T-cell (primary cell): ENCODE measurements at regions of chr9 and their contacts with region 1.

Region 1: DNA sequence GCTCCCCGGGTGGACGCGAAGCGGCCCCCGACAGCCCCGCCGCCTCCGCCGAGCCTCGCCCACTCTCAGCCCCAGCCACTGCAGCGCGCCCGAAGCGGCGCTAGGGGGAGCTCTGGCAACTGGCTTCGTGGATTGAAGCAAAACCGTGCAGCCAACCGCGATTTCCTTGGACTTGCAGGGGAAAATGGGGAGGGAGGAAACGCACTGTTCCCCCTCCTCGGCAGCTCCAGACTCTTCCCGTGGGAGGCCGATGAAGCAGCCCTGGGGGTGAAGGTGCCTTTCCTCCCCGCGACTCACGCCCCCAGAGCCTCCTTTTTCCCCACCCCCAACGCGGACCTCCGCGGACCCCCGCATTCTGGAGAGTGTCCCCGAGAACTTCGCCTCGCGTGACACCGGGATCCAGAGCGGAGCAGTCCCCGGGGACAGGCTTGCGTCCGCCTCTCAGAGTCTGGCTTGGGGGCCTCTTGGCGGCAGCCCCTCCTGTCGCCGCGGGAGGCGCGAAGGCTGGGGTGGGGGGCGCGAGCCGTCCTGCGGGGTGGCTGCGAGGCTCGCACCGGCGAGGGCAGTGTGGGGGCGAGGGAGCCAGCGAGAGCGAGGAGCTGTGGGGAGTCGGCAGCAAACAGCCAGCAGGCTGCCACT is 3.9 kb downstream of the IER5L start:
- DNase-seq: peak; percentile 46 to 87 (median 70)
- ATAC-seq: peak; percentile 15 to 21 (median 18)
- H3K4me3 ChIP-seq: peak overlapping the region; percentile 66 to 89
- H3K4me3 Mint-ChIP-seq: peak overlapping the region; percentile 79 to 85 (median 84)
- H3K27ac ChIP-seq: peak overlapping the region; percentile 20
- H3K27ac Mint-ChIP-seq: peak overlapping the region; percentile 31 to 39
- H3K4me1 ChIP-seq: peaks cover 0 to 43% of the 10 kb centered on the region in 2 experiments
- H3K4me1 Mint-ChIP-seq: peaks cover 4 to 12% (median 7%) of the 10 kb centered on the region in 3 donors
- H3K27me3 ChIP-seq: peaks cover 0 to 46% of the 10 kb centered on the region in 2 experiments
- H3K27me3 Mint-ChIP-seq: peaks cover 0 to 5% of the 10 kb centered on the region in 2 donors

Region 2: DNA sequence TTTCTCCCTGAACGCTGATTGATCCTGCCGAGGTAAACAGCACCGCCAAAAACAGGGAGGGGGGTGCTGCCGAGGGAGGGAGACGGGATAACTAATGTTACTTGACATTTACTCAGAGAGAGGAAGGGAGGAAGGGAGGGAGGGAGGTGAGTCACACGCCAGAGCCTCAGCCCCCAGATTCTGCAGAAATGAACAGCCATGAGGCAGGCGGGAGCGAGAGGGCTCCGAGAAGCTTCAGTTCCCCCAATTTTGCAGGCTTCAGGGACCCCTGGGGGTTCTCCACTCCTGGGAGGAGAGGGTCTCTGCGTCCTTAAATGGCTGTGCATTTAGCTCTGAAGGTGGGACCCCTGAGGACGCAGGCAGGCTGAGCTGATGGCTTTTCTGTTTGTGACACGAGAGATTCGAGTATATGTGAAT is 63.0 kb after region 1 on chr9:
- CTCF ChIA-PET with region 1: interaction called in 1 of 2 experiments, 13 read pairs
- POLR2A ChIA-PET with region 1: interaction called in 1 of 2 experiments, 3 read pairs
- DNase-seq: peak in 14 of 35 experiments; percentile 12 to 72 (median 32)
- ATAC-seq: peak; percentile 50 to 72 (median 68)
- H3K4me3 ChIP-seq: peak overlapping the region; percentile 50 to 71
- H3K4me3 Mint-ChIP-seq: peak overlapping the region; percentile 84 to 90 (median 89)
- H3K27ac ChIP-seq: peak overlapping the region; percentile 68
- H3K27ac Mint-ChIP-seq: peak overlapping the region; percentile 94 to 98
- H3K4me1 ChIP-seq: peaks cover 17 to 54% of the 10 kb centered on the region in 2 experiments
- H3K4me1 Mint-ChIP-seq: peaks cover 59 to 69% (median 61%) of the 10 kb centered on the region in 3 donors
- H3K27me3 ChIP-seq: no peaks in the 10 kb centered on the region
- H3K27me3 Mint-ChIP-seq: no peaks in the 10 kb centered on the region